Naive thymus-derived CD8-positive, alpha-beta T cell (primary cell): ENCODE measurements at regions of chr20 and their contacts with region 1.

Region 1: GRCh38 chr20:38875175-38875993 is 50.8 kb upstream of the FAM83D start:
- DNase-seq: peak; percentile 28 to 82 (median 66)
- ATAC-seq: peak; percentile 72 to 76
- H3K4me3 Mint-ChIP-seq: peak overlapping the region; percentile 79 to 91 (median 84)
- H3K27ac Mint-ChIP-seq: peak overlapping the region; percentile 94 to 100 (median 98)
- H3K4me1 Mint-ChIP-seq: peaks cover 47 to 96% (median 83%) of the 10 kb centered on the region in 4 donors
- H3K27me3 Mint-ChIP-seq: no peaks in the 10 kb centered on the region

Region 2: DNA sequence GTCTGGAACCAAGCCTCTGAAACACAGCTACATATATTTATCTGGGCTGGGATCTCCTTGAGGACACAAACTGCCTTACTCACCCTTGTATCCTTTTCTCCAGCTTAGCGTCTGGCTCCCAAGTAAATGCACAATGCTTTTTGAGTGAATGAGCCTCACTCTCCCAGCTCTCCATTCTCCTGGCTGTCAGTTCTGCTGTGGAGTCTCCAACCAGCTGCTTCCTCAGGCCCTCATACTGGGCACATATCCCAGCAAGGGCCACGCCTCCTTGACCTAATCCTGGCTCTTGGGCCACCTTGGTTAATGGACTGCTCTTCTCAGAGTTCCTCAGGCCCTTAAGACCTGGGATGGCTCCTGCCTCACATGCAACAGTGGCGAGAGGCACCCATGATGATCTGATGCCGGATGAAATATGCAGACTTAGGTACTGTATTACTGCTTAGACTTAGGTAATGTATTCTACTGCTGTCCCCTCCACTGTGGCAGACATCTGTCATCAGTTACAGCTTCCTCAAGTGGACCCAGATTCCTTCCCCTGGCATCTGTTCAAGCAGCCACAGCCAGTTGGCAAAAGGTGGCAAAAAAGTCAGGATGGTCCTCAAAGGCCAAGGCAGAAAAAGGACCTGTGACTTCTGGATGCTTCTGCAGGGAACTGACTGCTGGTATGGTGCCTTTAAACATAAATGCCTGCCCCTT is 456.7 kb before region 1 on chr20:
- POLR2A ChIA-PET with region 1: no interaction called
- DNase-seq: no peak
- ATAC-seq: peak in 1 of 2 donors; percentile 26
- H3K4me3 Mint-ChIP-seq: no peak overlapping the region
- H3K27ac Mint-ChIP-seq: peak overlapping the region in 6 of 10 donors; percentile 38 to 82 (median 52)
- H3K4me1 Mint-ChIP-seq: peaks cover 2 to 14% (median 7%) of the 10 kb centered on the region in 4 donors
- H3K27me3 Mint-ChIP-seq: no peaks in the 10 kb centered on the region

Region 3: GRCh38 chr20:38842558-38842981 is 32.8 kb before region 1 on chr20:
- POLR2A ChIA-PET with region 1: interaction called, 13 read pairs
- DNase-seq: peak in 2 of 10 donors; percentile 15 to 49
- ATAC-seq: peak; percentile 59 to 64
- H3K4me3 Mint-ChIP-seq: peak overlapping the region; percentile 12 to 75 (median 60)
- H3K27ac Mint-ChIP-seq: peak overlapping the region; percentile 78 to 98 (median 90)
- H3K4me1 Mint-ChIP-seq: peaks cover 24 to 88% (median 70%) of the 10 kb centered on the region in 4 donors
- H3K27me3 Mint-ChIP-seq: no peaks in the 10 kb centered on the region

Region 4: GRCh38 chr20:38893565-38894090 is 18.2 kb after region 1 on chr20:
- POLR2A ChIA-PET with region 1: interaction called, 32 read pairs
- DNase-seq: peak; percentile 60 to 83 (median 79)
- ATAC-seq: peak; percentile 94 to 97
- H3K4me3 Mint-ChIP-seq: peak overlapping the region; percentile 1 to 66 (median 60)
- H3K27ac Mint-ChIP-seq: peak overlapping the region; percentile 57 to 96 (median 92)
- H3K4me1 Mint-ChIP-seq: peaks cover 17 to 44% (median 26%) of the 10 kb centered on the region in 4 donors
- H3K27me3 Mint-ChIP-seq: no peaks in the 10 kb centered on the region

Region 5: GRCh38 chr20:38935285-38935684 is 59.9 kb after region 1 on chr20:
- POLR2A ChIA-PET with region 1: no interaction called
- DNase-seq: no peak
- ATAC-seq: no peak
- H3K4me3 Mint-ChIP-seq: no peak overlapping the region
- H3K27ac Mint-ChIP-seq: no peak overlapping the region
- H3K4me1 Mint-ChIP-seq: peaks cover 0 to 3% (median 0%) of the 10 kb centered on the region in 4 donors
- H3K27me3 Mint-ChIP-seq: no peaks in the 10 kb centered on the region